ENCODE measurements at regions of chr13 and their contacts with region 1.

Region 1: GRCh38 chr13:98429977-98430736 is 146.8 kb downstream of the STK24 start:
- DNase-seq: no peak
- ATAC-seq: no peak
- H3K4me3 Mint-ChIP-seq: no peak overlapping the region
- H3K27ac Mint-ChIP-seq: no peak overlapping the region
- H3K4me1 Mint-ChIP-seq: no peaks in the 10 kb centered on the region
- H3K27me3 Mint-ChIP-seq: peaks cover 22% of the 10 kb centered on the region
- CTCF ChIP-seq: no peak

Region 2: DNA sequence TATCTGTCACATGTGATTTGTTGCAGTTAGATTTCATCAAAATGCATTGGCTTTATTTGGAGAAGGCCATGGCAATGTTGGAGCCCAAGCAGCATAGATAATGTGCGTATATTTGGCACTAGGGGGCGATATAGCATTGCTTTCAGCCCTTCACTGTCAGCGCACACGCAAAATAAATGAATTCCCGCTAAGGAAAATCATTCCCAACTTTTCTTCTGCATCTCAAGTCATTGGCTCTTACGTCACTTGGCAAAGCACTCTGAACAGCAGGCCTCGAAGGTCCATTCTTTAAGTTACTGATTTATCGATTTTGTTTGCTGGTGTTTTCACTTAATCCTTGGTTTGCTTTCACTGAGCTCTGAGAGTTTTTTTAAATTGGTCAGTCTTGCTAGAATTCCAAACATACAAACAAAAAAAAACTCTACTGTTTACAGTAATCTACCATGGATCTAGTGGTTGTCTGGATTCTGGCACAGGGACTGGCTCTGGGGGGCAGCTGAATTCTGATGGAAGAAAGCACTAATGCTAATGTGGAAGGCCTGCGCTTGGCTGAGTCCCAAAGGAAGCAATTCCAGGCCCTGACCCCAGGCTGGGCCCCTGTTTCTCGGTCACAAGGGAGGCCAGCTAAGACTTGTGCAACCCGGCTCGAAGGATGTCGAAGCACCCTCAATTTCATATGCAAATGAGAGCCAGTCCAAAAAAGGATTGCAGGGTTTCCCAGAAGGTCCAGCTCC is 574.4 kb before region 1 on chr13:
- CTCF ChIA-PET with region 1: no interaction called
- POLR2A ChIA-PET with region 1: no interaction called
- intact Hi-C with region 1: loop called (anchors 5 kb)
- DNase-seq: no peak
- ATAC-seq: no peak
- H3K4me3 Mint-ChIP-seq: no peak overlapping the region
- H3K27ac Mint-ChIP-seq: no peak overlapping the region
- H3K4me1 Mint-ChIP-seq: peaks cover 8% of the 10 kb centered on the region
- H3K27me3 Mint-ChIP-seq: peaks cover 3% of the 10 kb centered on the region
- CTCF ChIP-seq: peak; percentile 23